Dorsolateral prefrontal cortex (tissue), 120 donors: ENCODE measurements at regions of chr18 and their contacts with region 1.

Region 1: GRCh38 chr18:48859311-48860268 is 91.2 kb downstream of the SMAD7 start:
- DNase-seq: peak; percentile 85 to 94 (median 92)
- H3K4me3 ChIP-seq: peak overlapping the region in 33 of 59 donors; percentile 1 to 47 (median 24)
- H3K27ac ChIP-seq: peak overlapping the region; percentile 11 to 98 (median 93)
- H3K27me3 ChIP-seq: no peaks in the 10 kb centered on the region
- CTCF ChIP-seq: peak in 48 of 56 donors; percentile 4 to 64 (median 35)

Region 2: DNA sequence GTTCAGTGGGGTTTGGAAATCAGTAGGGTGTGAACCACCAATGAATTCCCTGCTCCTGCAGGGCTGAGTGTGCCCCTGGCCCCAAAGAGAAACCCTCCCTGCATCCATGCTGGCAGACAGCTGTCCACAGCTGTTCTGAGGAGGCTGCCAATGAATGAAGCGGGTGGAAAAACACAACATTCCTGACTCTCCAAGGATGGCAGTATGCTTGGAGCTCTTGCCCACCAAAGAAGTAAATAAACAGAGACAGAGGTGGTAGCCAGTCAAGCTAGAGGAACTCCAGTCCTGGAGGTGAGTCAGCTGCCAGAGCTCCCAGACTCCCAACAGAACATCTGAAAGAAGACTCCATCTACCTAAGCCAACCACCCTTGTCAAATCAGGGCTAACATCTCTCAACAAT is 456.6 kb before region 1 on chr18:
- intact Hi-C with region 1: no loop called
- DNase-seq: no peak
- H3K4me3 ChIP-seq: no peak overlapping the region
- H3K27ac ChIP-seq: no peak overlapping the region
- H3K27me3 ChIP-seq: peaks cover 0 to 7% (median 0%) of the 10 kb centered on the region in 45 donors
- CTCF ChIP-seq: no peak

Region 3: DNA sequence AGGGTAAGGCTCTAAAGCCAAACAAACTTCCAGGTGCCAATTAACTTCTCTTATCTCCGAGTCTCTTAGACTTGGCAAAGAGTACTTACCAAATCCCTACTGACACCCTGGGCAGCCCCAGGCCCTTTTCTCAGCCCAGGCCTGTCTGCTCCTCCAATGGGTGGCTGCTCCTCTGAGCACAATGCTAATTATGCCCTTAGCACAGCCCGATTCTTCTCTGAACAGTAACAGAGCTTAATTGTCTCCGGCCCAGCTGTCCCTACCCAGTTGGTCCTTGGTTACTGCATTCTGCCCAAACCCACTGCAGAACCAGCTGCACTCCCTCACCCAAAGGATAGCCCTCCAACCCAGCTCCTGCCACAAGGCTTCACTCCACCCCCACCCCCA is 19.1 kb before region 1 on chr18:
- intact Hi-C with region 1: loop called in 1 of 2 experiments (anchors 1 kb)
- DNase-seq: peak in 9 of 10 donors; percentile 43 to 83 (median 68)
- H3K4me3 ChIP-seq: no peak overlapping the region
- H3K27ac ChIP-seq: peak overlapping the region; percentile 49 to 98 (median 92)
- H3K27me3 ChIP-seq: no peaks in the 10 kb centered on the region
- CTCF ChIP-seq: peak in 2 of 56 donors; percentile 5 to 10

Region 4: DNA sequence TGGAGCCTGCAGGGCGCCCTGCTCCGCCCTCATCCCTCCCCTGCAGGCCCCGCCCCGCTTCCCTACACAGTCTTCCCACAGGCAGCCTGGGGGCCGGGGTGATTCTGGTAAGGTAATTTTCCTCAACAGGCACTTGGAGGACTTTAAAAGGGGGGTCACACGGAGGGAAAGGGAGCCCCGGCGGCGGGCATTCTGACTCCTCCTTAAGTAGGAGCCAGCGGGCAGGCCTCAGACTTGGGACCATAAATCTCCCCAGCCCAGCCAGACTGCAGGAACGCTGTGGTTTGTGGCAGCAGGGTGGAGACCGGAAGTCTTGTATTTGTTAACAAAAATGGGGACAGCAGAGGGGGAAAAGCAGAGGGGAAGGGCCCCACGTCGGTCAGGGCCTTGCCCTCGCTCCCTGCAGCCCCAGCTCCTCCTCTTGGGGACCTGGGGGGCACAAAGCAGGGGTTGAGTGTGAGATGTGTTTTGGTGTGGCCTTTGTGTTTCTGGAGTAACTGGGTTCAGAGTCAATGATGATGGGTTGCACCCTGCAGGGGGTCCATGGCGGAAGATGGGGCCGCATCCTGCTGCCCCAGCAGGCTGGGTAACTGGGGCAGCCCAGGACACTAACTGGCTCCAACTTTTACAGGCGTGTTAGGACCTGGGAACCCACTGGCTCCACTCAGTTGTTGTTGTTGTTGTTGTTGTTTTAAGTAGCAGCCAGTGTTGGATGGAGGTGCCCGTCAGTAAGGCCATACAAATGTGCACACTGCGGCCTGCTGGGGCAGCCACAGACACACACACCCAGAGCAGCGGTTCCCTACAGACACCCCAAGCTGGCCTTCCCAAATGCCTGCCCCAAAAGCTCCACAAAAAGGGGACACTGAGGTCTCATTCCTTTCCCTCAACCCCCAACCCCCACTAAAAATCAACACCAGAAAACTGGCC is 63.5 kb after region 1 on chr18:
- intact Hi-C with region 1: loop called in 1 of 2 experiments (anchors 5 kb)
- DNase-seq: peak in 2 of 10 donors; percentile 42 to 49
- H3K4me3 ChIP-seq: peak overlapping the region in 44 of 59 donors; percentile 3 to 47 (median 24)
- H3K27ac ChIP-seq: peak overlapping the region in 55 of 59 donors; percentile 10 to 89 (median 77)
- H3K27me3 ChIP-seq: no peaks in the 10 kb centered on the region
- CTCF ChIP-seq: no peak